Transverse colon (tissue), 4 donors: ENCODE measurements at regions of chr19 and their contacts with region 1.

Region 1: GRCh38 chr19:32852216-32852615 is 17.4 kb downstream of the SLC7A9 start:
- DNase-seq: no peak
- H3K4me3 ChIP-seq: no peak overlapping the region
- H3K27ac ChIP-seq: no peak overlapping the region
- H3K4me1 ChIP-seq: no peaks in the 10 kb centered on the region
- H3K27me3 ChIP-seq: no peaks in the 10 kb centered on the region
- CTCF ChIP-seq: no peak
- EP300 ChIP-seq: no peak
- POLR2A ChIP-seq: no peak

Region 2: DNA sequence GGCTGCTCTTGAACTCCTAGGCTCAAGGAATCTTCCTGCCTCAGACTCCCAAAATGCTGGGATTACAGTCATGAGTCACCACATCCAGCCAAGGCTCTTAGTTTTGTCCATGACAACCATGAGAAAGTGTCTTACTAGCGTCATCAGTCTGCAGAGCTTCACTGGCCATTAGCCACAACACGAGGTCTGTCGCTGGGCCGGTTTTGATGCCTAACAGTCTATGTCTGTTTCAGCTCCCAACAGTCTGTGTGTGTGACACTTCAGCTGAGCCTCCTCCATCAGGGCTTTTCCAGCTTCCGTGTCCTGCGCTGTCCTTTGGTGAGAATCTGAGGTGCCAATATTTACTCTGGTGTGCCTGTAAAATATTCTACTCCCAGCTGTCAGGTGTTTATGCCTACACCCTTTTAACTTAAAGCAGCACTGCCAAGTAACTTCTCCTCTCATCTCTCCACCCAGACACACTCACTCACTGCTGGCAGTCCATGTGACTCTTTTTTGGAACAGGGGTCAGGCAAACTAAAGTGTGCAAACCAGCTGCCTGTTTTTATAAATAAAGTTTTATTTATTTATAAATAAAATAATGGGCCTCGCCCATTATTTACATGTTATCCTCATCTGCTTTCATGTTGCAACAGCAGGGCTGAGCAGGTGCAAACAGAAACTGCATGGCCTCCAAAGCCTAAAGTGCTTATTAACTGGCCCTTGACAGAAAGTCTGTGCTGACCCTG is 72.2 kb after region 1 on chr19:
- in situ Hi-C with region 1: no loop called
- intact Hi-C with region 1: no loop called
- DNase-seq: peak; percentile 31
- H3K4me3 ChIP-seq: no peak overlapping the region
- H3K27ac ChIP-seq: peak overlapping the region in 3 of 4 donors; percentile 38 to 48 (median 39)
- H3K4me1 ChIP-seq: peaks cover 0 to 13% (median 4%) of the 10 kb centered on the region in 4 donors
- H3K27me3 ChIP-seq: no peaks in the 10 kb centered on the region
- CTCF ChIP-seq: no peak
- EP300 ChIP-seq: no peak
- POLR2A ChIP-seq: no peak

Region 3: GRCh38 chr19:34489175-34489574 is 1637.0 kb after region 1 on chr19:
- in situ Hi-C with region 1: no loop called
- intact Hi-C with region 1: loop called (anchors 5 kb)
- DNase-seq: no peak
- H3K4me3 ChIP-seq: no peak overlapping the region
- H3K27ac ChIP-seq: no peak overlapping the region
- H3K4me1 ChIP-seq: peaks cover 0 to 2% (median 0%) of the 10 kb centered on the region in 4 donors
- H3K27me3 ChIP-seq: no peaks in the 10 kb centered on the region
- CTCF ChIP-seq: no peak
- EP300 ChIP-seq: no peak
- POLR2A ChIP-seq: no peak